Naive thymus-derived CD8-positive, alpha-beta T cell (primary cell): ENCODE measurements at regions of chr3 and their contacts with region 1.

Region 1: GRCh38 chr3:48989796-48990635 is at the start of gene P4HTM:
- DNase-seq: peak; percentile 51 to 86 (median 62)
- ATAC-seq: peak; percentile 65 to 69
- H3K4me3 Mint-ChIP-seq: peak within 1 kb of the TSS; percentile 89 to 94 (median 92)
- H3K27ac Mint-ChIP-seq: peak within 1 kb of the TSS; percentile 90 to 96 (median 94)
- H3K4me1 Mint-ChIP-seq: peaks cover 21 to 54% (median 46%) of the 10 kb centered on the region in 4 donors
- H3K27me3 Mint-ChIP-seq: no peaks in the 10 kb centered on the region
- polyA plus RNA-seq, gene P4HTM: 20.3 to 23.3 (median 22.9) TPM

Region 2: DNA sequence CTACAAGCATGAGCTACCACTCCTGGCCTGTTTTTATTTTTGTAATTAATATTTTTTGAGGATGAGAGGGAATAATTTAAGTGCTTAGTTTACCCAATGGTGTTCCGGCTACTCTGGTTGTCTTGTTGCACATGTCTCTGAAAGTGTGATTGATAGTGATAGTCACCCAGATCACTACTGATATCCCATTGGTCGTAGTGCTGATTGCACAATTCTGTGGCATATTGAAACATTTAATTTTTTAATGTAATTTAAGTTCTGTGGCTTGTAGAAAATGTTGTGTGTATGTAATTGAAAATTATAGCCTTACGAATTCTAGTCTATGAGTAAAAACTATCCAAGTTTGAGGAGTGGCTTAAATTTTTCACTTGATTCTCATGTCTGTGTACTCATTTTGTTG is 59.4 kb before region 1 on chr3:
- POLR2A ChIA-PET with region 1: no interaction called
- DNase-seq: no peak
- ATAC-seq: no peak
- H3K4me3 Mint-ChIP-seq: no peak overlapping the region
- H3K27ac Mint-ChIP-seq: peak overlapping the region in 1 of 10 donors; percentile 20
- H3K4me1 Mint-ChIP-seq: peaks cover 38 to 81% (median 76%) of the 10 kb centered on the region in 4 donors
- H3K27me3 Mint-ChIP-seq: no peaks in the 10 kb centered on the region

Region 3: GRCh38 chr3:49007068-49007770 is 17.2 kb after region 1 on chr3 and contains the start of gene WDR6:
- POLR2A ChIA-PET with region 1: interaction called, 118 read pairs
- DNase-seq: peak; percentile 95 to 99 (median 97)
- ATAC-seq: peak; percentile 92 to 93
- H3K4me3 Mint-ChIP-seq: peak within 1 kb of the TSS; percentile 94 to 100 (median 99)
- H3K27ac Mint-ChIP-seq: peak within 1 kb of the TSS; percentile 97 to 100 (median 99)
- H3K4me1 Mint-ChIP-seq: peaks cover 24 to 46% (median 29%) of the 10 kb centered on the region in 4 donors
- H3K27me3 Mint-ChIP-seq: no peaks in the 10 kb centered on the region
- polyA plus RNA-seq, gene WDR6: 96.3 to 126 (median 111) TPM

Region 4: GRCh38 chr3:49013755-49014628 is 24.0 kb after region 1 on chr3:
- POLR2A ChIA-PET with region 1: interaction called, 118 read pairs
- DNase-seq: peak in 5 of 10 donors; percentile 22 to 45 (median 41)
- ATAC-seq: peak; percentile 30 to 32
- H3K4me3 Mint-ChIP-seq: no peak overlapping the region
- H3K27ac Mint-ChIP-seq: no peak overlapping the region
- H3K4me1 Mint-ChIP-seq: peaks cover 13 to 44% (median 17%) of the 10 kb centered on the region in 4 donors
- H3K27me3 Mint-ChIP-seq: no peaks in the 10 kb centered on the region

Region 5: GRCh38 chr3:49021813-49022687 is 32.0 kb after region 1 on chr3 and contains the start of gene NDUFAF3:
- POLR2A ChIA-PET with region 1: interaction called, 194 read pairs
- DNase-seq: peak; percentile 81 to 93 (median 90)
- ATAC-seq: peak; percentile 77 to 83
- H3K4me3 Mint-ChIP-seq: peak within 1 kb of the TSS; percentile 90 to 99 (median 98)
- H3K27ac Mint-ChIP-seq: peak within 1 kb of the TSS; percentile 96 to 99 (median 98)
- H3K4me1 Mint-ChIP-seq: peaks cover 12 to 65% (median 52%) of the 10 kb centered on the region in 4 donors
- H3K27me3 Mint-ChIP-seq: peaks cover 0 to 1% (median 0%) of the 10 kb centered on the region in 5 donors
- polyA plus RNA-seq, gene NDUFAF3: 140 to 226 (median 202) TPM